ENCODE measurements at regions of chr2 and their contacts with region 1.

Region 1: DNA sequence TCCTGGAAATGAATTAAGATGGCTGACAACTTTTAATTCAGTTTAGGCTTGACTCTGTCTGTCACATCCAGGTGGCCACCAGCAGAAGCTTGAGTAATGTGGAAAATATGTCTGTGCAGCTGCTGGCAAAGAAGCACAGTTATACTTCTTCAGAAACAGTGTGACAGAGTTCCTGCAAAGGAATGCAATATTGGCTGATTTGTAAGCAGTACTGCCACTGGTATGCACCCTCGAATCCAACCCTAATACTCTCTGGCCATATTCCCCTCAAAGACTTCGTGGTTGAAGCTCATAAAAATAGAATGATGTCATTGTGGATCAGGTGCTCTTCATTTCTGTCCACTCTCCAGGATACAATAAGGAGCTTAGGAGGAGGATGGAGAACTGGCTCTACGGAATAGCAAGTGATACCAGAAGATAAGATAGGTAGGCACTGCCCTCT is 86.2 kb downstream of the METTL8 start:
- DNase-seq: peak; percentile 20
- CTCF ChIP-seq: no peak

Region 2: GRCh38 chr2:171334171-171334570 is 13.4 kb before region 1 on chr2:
- CTCF ChIA-PET with region 1: interaction called, 12 read pairs
- POLR2A ChIA-PET with region 1: interaction called, 10 read pairs
- DNase-seq: no peak
- CTCF ChIP-seq: no peak

Region 3: GRCh38 chr2:171360905-171361304 is 13.3 kb after region 1 on chr2:
- CTCF ChIA-PET with region 1: interaction called, 19 read pairs
- POLR2A ChIA-PET with region 1: no interaction called
- DNase-seq: no peak
- CTCF ChIP-seq: no peak